ENCODE measurements at regions of chr9 and their contacts with region 1.

Region 1: DNA sequence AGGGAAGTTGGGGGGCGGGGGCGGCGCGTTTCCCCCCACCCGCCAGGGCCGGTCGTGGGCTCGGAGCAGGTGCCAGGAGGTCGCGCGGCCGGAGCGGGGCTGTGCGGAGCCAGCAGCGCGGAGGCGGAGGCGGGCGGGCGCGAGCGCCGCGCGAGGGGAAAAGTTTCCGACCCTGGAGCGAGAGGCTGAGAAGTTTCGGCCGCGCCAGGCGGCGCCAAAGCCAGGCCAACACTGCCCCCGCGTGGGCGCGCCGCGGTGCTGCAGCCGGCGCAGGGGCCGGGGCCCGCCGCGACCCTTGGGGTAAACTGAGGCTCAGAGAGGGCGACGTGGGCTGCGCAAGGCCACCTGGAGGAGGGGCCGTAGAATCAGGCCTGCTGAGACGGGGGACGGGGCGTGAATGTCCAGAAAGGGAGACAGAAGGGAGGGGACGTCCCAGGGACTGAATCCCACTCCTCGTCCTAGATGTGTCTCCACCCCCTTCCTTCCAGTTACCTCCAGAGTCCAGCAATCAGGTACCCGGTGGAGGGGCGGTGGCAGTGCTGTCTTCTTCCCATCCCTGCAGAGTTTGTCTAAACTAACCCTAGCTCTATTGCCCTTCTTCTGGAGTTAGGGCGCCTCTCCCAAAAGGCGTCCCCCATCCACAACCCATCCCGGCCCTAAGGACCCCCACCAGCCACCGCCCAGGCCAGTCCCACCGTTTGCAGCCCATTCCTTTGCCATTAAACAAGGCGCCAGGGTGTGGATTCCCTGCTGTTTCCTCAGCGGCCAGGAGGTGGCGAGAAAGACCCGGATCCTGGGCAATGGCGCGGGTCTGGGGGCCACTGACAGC is 10.2 kb downstream of the C9orf50 start:
- DNase-seq: peak; percentile 81 to 90 (median 87)
- H3K4me3 ChIP-seq: peak overlapping the region; percentile 57
- H3K27ac ChIP-seq: peak overlapping the region; percentile 56 to 89
- H3K4me1 ChIP-seq: peaks cover 16% of the 10 kb centered on the region
- H3K27me3 ChIP-seq: no peaks in the 10 kb centered on the region
- CTCF ChIP-seq: peak; percentile 84 to 100 (median 100)
- EP300 ChIP-seq: no peak
- POLR2A ChIP-seq: peak; percentile 47

Region 2: DNA sequence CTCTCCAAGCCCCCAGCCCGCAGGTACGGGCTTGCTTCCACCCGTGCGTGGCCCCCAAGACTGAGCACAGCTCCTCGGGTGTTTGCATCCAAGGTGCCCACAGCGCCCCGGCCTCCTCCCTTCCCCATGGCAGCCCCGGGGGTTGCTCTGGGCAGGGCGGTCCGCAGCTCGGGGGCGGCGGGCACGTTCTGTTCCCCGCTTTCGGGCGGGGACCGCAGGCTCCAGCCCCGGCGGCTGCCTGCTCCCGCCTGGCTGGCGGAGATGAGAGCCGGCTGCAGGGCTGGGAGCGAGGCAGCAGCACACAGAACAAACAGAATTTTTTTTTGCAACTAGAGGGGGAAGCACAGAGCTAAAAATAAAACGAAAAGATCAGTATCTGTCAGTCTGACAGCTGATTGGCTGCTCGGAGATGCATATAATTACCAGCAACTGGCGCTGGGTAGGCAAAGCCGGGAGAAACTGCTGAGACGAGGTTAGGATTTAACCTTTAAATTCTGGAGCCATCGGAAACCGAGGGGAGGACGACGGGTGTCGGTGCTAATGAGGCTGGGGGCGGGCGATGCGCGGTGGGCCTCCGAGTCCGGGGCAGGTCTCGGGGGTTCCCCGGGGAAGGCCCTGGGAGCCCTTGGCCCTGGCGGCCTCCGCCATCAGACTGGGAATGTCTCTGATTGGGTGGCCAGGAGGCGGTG is 290.0 kb before region 1 on chr9:
- intact Hi-C with region 1: loop called in 3 of 4 experiments (anchors 5 to 10 kb)
- DNase-seq: peak; percentile 62 to 84 (median 64)
- H3K4me3 ChIP-seq: peak overlapping the region; percentile 34
- H3K27ac ChIP-seq: peak overlapping the region; percentile 88 to 94
- H3K4me1 ChIP-seq: peaks cover 35% of the 10 kb centered on the region
- H3K27me3 ChIP-seq: no peaks in the 10 kb centered on the region
- CTCF ChIP-seq: peak in 1 of 3 donors; percentile 26
- EP300 ChIP-seq: no peak
- POLR2A ChIP-seq: no peak

Region 3: GRCh38 chr9:129383561-129384416 is 226.9 kb before region 1 on chr9:
- intact Hi-C with region 1: loop called in 2 of 4 experiments (anchors 10 kb)
- DNase-seq: peak; percentile 86 to 91 (median 87)
- H3K4me3 ChIP-seq: peak overlapping the region; percentile 69
- H3K27ac ChIP-seq: peak overlapping the region; percentile 39 to 86
- H3K4me1 ChIP-seq: peaks cover 4% of the 10 kb centered on the region
- H3K27me3 ChIP-seq: no peaks in the 10 kb centered on the region
- CTCF ChIP-seq: peak in 2 of 3 donors; percentile 30 to 44
- EP300 ChIP-seq: no peak
- POLR2A ChIP-seq: no peak

Region 4: GRCh38 chr9:129413537-129414376 is 196.9 kb before region 1 on chr9:
- intact Hi-C with region 1: loop called in 1 of 4 experiments (anchors 5 kb)
- DNase-seq: peak; percentile 99 to 100 (median 100)
- H3K4me3 ChIP-seq: peak overlapping the region; percentile 70
- H3K27ac ChIP-seq: peak overlapping the region; percentile 97
- H3K4me1 ChIP-seq: peaks cover 15% of the 10 kb centered on the region
- H3K27me3 ChIP-seq: no peaks in the 10 kb centered on the region
- CTCF ChIP-seq: peak in 2 of 3 donors; percentile 14 to 23
- EP300 ChIP-seq: peak; percentile 91
- POLR2A ChIP-seq: peak; percentile 94

Region 5: GRCh38 chr9:129487642-129488409 is 122.9 kb before region 1 on chr9:
- intact Hi-C with region 1: loop called in 2 of 4 experiments (anchors 5 to 10 kb)
- DNase-seq: peak in 4 of 5 donors; percentile 69 to 80 (median 76)
- H3K4me3 ChIP-seq: peak overlapping the region; percentile 53
- H3K27ac ChIP-seq: peak overlapping the region; percentile 96 to 100
- H3K4me1 ChIP-seq: peaks cover 34% of the 10 kb centered on the region
- H3K27me3 ChIP-seq: no peaks in the 10 kb centered on the region
- CTCF ChIP-seq: no peak
- EP300 ChIP-seq: no peak
- POLR2A ChIP-seq: no peak

Region 6: GRCh38 chr9:129495534-129496325 is 115.0 kb before region 1 on chr9:
- intact Hi-C with region 1: loop called in 2 of 4 experiments (anchors 5 to 10 kb)
- DNase-seq: peak; percentile 95 to 98 (median 96)
- H3K4me3 ChIP-seq: peak overlapping the region; percentile 55
- H3K27ac ChIP-seq: peak overlapping the region; percentile 96 to 98
- H3K4me1 ChIP-seq: peaks cover 25% of the 10 kb centered on the region
- H3K27me3 ChIP-seq: no peaks in the 10 kb centered on the region
- CTCF ChIP-seq: no peak
- EP300 ChIP-seq: peak; percentile 49
- POLR2A ChIP-seq: peak; percentile 16

Region 7: GRCh38 chr9:129550199-129550839 is 60.4 kb before region 1 on chr9:
- intact Hi-C with region 1: loop called in 3 of 4 experiments (anchors 5 to 10 kb)
- DNase-seq: peak; percentile 88 to 94 (median 92)
- H3K4me3 ChIP-seq: peak overlapping the region; percentile 49
- H3K27ac ChIP-seq: peak overlapping the region; percentile 81 to 84
- H3K4me1 ChIP-seq: peaks cover 4% of the 10 kb centered on the region
- H3K27me3 ChIP-seq: no peaks in the 10 kb centered on the region
- CTCF ChIP-seq: no peak
- EP300 ChIP-seq: peak; percentile 68
- POLR2A ChIP-seq: no peak